ENCODE measurements at regions of chr7 and their contacts with region 1.

Region 1: DNA sequence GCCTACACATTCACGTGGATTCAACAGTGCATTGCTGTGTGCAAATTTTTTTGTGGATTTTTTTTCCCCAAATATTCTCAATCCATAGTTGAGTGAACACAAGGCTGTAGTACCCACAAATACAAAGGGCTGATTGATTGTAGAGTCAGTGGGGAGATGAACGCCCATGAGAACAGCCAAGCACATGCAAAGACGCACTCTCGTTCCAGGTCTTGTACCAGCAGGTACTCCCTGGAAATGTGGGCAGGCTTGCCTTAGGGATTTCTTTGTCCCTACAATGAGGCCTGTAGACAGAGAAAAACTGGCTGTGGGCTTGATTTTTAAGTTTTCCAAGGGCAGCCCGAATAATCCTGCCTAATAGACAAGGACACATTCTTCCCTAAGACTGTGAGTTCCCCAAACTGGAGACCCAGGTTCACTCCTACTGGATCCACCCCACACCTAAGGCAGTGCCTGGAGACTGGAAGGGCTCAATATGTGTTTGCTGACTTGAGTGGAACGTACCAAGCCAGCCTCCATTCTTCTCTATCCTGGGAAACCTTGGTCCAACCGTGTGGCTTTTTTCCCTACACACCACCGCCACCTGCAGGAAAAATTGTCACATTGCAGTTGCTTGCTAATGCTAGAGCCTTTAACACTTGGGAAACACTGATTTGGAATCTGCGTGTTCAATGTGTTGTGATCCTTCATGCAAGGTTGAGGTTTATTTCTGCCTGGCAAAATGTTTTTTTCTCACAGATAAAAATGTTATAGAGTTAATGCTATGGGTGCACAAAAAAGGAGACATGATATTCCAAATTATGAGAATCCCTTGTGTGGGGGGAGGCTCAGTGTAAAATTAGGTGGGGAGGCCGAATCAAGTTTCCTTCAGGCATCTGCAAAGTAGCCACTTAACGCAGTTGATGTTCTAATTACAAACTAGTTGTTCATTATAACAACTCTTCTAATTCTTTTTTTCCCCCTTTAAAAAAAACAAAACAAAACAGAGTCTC is 49.3 kb downstream of the PPP1R17 start:
- DNase-seq: peak; percentile 20 to 49
- ATAC-seq: peak in 7 of 8 donors; percentile 53 to 82 (median 74)
- H3K4me3 ChIP-seq: no peak overlapping the region
- H3K27ac ChIP-seq: no peak overlapping the region
- H3K4me1 ChIP-seq: no peaks in the 10 kb centered on the region
- H3K27me3 ChIP-seq: no peaks in the 10 kb centered on the region
- CTCF ChIP-seq: peak; percentile 84 to 88 (median 85)

Region 2: DNA sequence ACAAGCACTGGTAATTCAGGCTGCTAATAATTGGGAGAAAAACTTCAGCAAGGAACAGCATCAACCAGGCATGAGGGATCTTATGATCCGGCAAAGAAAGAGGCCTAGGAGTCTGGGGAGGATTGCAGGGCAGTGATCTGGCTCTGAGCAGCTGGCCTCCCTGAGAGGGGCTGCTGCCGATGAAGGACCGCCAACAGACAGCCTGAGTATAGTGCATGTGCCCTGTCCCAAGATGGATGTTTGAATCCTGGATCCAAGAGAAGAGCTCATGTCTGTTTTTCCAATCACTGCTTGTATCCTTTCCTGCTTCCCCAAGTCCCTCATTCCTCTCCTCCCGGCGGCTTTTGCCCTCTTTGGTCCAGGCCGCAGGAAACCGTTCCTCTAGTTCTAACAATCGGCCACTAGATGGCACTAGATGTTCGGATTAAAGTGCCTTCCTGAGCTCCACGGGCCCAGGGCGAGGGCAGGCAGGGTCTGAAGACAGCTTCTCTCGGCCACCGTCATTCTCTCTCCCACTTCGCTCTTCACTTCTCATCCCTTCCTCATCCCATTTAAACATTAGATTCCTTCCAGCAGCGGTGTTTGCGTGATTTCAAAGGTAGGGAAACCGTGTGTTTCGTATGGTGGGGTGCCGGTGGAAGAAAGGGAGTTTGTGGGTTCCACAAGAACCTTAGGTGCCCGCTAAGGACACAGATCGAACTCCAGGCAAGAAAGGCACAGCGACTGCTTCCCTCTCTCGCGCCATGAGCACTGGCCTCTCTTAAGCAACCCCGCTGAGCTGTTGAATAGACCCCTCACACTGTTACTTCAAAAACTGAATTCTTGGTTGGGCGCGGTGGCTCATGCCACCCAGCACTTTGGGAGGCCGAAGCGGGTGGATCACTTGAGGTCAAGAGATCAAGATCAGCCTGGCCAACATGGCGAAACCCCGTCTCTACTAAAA is 601.8 kb before region 1 on chr7:
- intact Hi-C with region 1: loop called in 9 of 10 experiments (anchors 2 to 10 kb)
- DNase-seq: peak; percentile 59 to 73
- ATAC-seq: peak; percentile 86 to 97 (median 94)
- H3K4me3 ChIP-seq: no peak overlapping the region
- H3K27ac ChIP-seq: peak overlapping the region in 3 of 10 donors; percentile 19 to 62 (median 31)
- H3K4me1 ChIP-seq: peaks cover 0 to 10% (median 0%) of the 10 kb centered on the region in 9 donors
- H3K27me3 ChIP-seq: peaks cover 0 to 7% (median 0%) of the 10 kb centered on the region in 7 donors
- CTCF ChIP-seq: peak; percentile 61 to 84 (median 78)

Region 3: GRCh38 chr7:31648288-31648687 is 88.0 kb before region 1 on chr7:
- intact Hi-C with region 1: loop called in 7 of 10 experiments (anchors 5 to 10 kb)
- DNase-seq: no peak
- ATAC-seq: no peak
- H3K4me3 ChIP-seq: no peak overlapping the region
- H3K27ac ChIP-seq: no peak overlapping the region
- H3K4me1 ChIP-seq: peaks cover 0 to 5% (median 0%) of the 10 kb centered on the region in 9 donors
- H3K27me3 ChIP-seq: peaks cover 0 to 5% (median 0%) of the 10 kb centered on the region in 7 donors
- CTCF ChIP-seq: peak in 7 of 9 donors; percentile 9 to 52 (median 45)

Measured in heart right ventricle (tissue), 16 donors.